Posterior vena cava (tissue), 2 donors: ENCODE measurements at regions of chr1 and their contacts with region 1.

Region 1: DNA sequence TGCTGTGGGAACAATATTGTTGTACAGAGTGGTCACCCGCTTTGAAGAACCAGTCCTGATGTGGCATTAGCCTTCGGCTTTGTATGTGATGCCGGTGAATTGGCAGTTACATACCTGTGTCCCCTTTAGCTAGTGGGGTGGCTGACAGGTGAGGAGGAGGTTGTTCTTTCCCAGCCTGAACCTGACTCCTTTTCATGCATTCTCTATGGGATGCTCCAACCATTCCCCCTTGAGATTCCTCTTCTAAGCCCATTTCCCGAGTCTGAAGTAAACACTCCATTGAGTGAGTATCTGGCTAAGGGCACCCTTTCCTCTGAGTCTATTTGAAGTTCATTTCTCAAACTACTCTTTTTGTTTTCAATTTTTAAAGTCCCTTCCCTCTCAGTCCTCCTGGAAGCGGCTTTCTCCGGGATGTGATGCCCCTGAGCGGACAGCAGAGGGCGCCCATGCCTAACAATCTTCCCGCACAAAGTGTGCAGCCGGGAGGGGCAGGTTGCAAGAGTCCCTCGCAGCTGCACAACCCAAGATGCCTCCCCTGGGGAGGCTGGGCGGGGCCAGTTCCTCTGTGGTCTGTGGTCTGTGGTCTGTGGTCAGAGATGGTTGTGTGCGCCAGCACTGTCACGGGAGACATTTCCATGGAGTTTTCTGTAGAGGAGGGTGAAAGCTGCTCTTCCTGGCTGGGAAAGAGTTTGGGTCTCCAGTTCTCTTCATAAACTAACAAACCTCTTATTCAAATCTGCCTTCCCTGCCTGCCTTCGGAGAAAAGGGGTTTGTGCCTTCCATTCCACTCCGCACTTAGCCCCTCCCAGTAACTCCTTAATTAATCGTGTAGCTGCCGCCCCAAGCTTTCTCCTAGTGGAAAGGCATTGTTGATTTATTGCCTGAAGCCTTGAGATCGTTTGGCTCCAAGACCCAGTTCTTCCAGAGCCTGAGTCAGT is 36.4 kb upstream of the LMX1A start:
- DNase-seq: peak; percentile 96

Region 2: DNA sequence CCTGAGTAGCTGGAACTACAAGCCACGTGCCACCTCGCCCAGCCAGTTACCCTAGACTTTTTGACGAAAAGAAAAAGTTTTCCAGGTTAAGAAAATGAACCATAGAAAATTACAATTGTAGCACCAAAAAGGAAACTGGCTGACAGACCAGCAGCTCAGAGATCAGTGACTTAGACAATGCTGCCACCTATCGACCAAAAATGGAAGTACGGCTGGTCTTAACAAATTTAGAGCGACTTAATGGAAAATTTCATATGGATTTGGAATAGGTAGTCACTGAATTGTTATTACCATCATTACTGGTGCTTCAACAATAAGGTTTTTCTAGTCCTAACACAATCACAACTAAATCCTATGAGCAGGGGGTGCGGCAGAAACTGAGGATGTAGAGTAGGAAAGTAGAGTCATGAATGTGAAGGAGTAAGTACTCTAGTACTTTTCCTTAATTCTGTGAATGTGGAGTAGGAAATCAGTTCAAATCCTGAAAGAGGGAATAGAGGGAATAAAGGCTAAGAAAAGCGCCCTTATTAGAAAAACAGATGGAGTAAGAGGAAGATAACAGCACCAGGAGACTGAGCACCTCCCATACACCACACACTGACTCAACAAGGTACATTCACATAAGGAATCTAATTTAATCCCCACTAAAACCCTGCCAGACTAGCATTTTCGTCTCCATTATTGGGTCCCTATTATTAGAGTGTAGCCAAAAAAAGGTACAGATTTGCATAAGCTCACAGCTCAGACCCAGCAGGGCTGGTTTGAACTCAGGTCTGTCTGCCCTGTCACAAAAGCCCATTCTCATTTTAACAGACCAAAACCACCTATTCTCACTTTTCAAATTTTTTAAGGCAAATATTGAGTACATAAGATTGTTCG is 200.3 kb after region 1 on chr1:
- intact Hi-C with region 1: loop called (anchors 5 kb)
- DNase-seq: no peak